GM12878 (cell line): ENCODE measurements at regions of chr22 and their contacts with region 1.

Region 1: DNA sequence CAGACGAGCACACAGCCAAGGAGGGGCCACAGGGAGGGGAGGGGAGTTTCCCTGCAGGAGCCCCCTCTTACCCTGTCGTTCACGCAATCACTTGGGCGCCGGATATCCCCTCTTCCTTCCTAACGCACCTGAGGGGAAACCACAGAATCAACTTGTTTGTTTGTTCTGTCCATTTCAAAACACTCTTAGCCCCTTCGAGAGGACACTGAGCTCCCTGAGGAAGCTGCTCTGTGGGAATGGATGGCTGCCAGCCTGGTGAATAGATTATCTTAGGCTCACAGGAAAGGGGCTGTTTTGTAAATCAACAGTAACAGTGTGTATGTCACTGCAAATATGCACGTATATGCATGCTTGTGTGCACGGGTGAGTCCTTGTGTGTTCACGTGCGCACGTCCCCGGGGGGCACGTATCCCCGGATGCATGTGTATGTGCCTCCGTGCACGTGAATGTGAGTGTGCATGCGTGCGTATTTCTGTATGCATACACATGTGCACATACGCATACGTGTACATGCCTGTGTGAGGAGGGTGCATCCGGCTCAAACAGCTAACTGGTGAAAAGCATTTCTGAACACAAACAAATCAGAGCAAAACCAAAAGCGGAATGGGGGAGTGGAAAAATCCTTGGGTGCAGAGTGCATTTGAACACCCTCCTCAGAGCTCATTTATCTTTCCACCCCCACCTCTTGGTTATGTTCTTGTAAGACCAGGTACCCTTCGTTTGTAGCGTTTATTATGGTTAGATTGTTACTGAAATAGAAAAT is 7.2 kb downstream of the ARSA start:
- DNase-seq: peak; percentile 86
- ATAC-seq: peak; percentile 86
- H3K4me3 ChIP-seq: peak overlapping the region; percentile 70
- H3K27ac ChIP-seq: peak overlapping the region; percentile 97
- H3K4me1 ChIP-seq: peaks cover 28% of the 10 kb centered on the region
- H3K27me3 ChIP-seq: no peaks in the 10 kb centered on the region
- CTCF ChIP-seq: peak in 1 of 3 experiments; percentile 74; a peak in 2 of 6 replicates
- EP300 ChIP-seq: no peak
- POLR2A ChIP-seq: peak; percentile 71
- RAD21 ChIP-seq: no peak

Region 2: DNA sequence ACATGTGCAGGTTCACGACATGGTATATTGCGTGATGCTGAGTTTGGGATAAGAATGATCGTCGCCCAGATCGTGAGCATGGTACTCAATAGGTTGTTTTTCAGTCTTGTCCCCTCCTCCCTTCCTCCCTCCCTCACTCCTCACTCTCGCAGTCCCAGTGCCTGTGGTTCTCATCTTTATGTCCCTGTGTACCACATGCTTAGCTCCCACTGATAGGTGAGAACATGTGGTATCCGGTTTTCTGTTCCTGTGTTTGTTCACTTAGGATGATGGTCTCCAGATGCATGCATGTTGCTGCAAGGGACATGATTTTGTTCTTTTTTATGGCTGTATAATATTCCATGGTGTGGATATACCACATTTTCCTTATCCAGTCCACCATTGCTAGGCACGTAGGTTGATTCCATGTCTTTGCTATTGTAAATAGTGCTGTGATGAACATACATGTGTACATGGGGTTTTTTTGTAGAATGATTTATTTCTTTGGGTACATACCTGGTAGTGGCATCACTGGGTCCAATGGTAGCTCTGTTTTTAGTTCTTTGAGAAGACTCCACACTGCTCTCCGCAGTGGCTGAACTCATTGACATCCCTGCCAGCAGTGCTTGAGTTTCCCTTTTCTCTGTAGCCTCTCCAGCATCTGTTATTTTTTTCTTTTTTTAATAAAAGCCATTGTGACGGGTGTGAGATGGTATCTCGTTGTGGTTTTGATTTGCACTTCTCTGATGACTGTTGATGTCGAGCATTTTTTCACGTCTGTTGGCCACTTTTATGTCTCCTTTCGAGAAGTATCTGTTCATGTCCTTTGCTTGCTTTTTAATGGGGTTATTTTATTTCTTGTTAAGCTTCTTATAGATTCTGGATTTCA is 750.7 kb before region 1 on chr22:
- CTCF ChIA-PET with region 1: no interaction called
- POLR2A ChIA-PET with region 1: no interaction called
- RAD21 ChIA-PET with region 1: no interaction called
- SMC1A ChIA-PET with region 1: no interaction called
- in situ Hi-C with region 1: no loop called
- intact Hi-C with region 1: no loop called
- DNase-seq: no peak
- ATAC-seq: no peak
- H3K4me3 ChIP-seq: no peak overlapping the region
- H3K27ac ChIP-seq: no peak overlapping the region
- H3K4me1 ChIP-seq: no peaks in the 10 kb centered on the region
- H3K27me3 ChIP-seq: no peaks in the 10 kb centered on the region
- CTCF ChIP-seq: no peak
- EP300 ChIP-seq: no peak
- POLR2A ChIP-seq: no peak
- RAD21 ChIP-seq: no peak

Region 3: DNA sequence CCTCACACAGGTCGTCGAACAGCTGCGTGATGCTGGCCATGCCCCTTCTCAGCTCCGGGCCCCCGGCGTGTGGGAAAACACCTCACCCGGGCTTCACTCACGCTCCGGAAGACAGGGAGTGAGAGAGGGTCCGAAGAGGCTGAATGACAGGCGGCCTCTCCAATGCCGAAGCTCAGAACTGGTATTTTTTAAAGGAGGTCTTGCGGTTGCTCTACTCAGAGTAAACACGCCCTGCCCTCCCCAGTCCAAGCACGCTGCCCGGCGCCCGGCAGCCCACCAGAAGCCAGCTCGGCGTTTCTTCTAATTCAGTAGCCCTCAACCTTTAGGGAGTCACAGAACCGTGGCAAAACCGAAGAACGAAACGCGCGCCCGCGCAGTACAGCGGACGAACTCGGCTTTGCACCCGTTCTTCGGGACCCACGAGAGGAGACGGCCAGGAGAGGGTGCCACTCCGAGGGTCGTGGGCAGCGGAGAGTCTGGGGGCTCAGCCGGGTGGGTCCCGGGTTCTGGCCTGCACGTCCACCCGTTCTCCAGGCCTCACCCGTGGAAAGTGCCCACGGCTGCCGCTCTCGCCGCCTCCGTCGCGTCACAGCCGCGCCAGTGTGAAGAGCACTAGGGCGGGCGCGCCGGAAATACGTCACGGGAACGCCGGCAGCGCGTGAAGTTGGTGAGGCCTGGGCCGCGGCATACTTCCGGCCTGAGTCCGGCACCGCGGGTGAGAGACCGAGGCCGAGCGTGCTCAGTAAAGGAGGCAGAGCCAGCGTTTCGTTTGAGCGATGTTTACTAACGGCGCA is 376.2 kb before region 1 on chr22 and contains the start of gene TUBGCP6:
- CTCF ChIA-PET with region 1: interaction called, 24 read pairs
- POLR2A ChIA-PET with region 1: no interaction called
- RAD21 ChIA-PET with region 1: interaction called, 3 read pairs
- SMC1A ChIA-PET with region 1: interaction called, 5 read pairs
- in situ Hi-C with region 1: no loop called
- intact Hi-C with region 1: loop called (anchors 5 kb)
- DNase-seq: peak; percentile 53
- ATAC-seq: peak; percentile 86
- H3K4me3 ChIP-seq: peak within 1 kb of the TSS; percentile 83
- H3K27ac ChIP-seq: peak within 1 kb of the TSS; percentile 71
- H3K4me1 ChIP-seq: peaks cover 20% of the 10 kb centered on the region
- H3K27me3 ChIP-seq: no peaks in the 10 kb centered on the region
- CTCF ChIP-seq: peak in 2 of 3 experiments; percentile 13 to 34; a peak in 3 of 6 replicates
- EP300 ChIP-seq: peak in 1 of 2 experiments; percentile 30; a peak in 1 of 4 replicates
- POLR2A ChIP-seq: peak; percentile 97
- RAD21 ChIP-seq: no peak
- polyA plus RNA-seq, gene TUBGCP6: 0.74 to 2.0 TPM

Region 4: DNA sequence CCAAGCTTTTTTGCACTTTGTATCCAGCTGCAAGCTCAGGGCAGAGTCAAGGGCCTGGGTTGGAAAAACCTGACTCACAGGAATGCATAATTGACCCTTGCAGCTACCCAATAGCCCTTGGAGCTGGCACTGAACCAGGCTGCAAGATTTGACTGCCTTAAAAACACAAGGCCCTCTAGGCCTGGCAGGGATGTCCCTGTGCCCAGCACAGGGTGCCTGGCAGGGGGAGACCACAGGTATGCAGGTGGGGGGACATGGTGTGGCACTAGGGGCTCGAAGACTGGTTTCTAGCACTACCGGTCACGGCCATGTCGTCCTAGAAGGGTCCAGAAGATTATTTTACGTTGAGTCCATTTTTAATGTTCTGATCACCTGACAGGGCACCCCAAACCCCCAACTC is 176.1 kb before region 1 on chr22:
- CTCF ChIA-PET with region 1: no interaction called
- POLR2A ChIA-PET with region 1: no interaction called
- RAD21 ChIA-PET with region 1: no interaction called
- SMC1A ChIA-PET with region 1: no interaction called
- in situ Hi-C with region 1: no loop called
- intact Hi-C with region 1: no loop called
- DNase-seq: no peak
- ATAC-seq: no peak
- H3K4me3 ChIP-seq: no peak overlapping the region
- H3K27ac ChIP-seq: no peak overlapping the region
- H3K4me1 ChIP-seq: no peaks in the 10 kb centered on the region; the same call in 1 of the 2 replicates
- H3K27me3 ChIP-seq: no peaks in the 10 kb centered on the region
- CTCF ChIP-seq: no peak
- EP300 ChIP-seq: no peak
- POLR2A ChIP-seq: no peak
- RAD21 ChIP-seq: no peak

Region 5: DNA sequence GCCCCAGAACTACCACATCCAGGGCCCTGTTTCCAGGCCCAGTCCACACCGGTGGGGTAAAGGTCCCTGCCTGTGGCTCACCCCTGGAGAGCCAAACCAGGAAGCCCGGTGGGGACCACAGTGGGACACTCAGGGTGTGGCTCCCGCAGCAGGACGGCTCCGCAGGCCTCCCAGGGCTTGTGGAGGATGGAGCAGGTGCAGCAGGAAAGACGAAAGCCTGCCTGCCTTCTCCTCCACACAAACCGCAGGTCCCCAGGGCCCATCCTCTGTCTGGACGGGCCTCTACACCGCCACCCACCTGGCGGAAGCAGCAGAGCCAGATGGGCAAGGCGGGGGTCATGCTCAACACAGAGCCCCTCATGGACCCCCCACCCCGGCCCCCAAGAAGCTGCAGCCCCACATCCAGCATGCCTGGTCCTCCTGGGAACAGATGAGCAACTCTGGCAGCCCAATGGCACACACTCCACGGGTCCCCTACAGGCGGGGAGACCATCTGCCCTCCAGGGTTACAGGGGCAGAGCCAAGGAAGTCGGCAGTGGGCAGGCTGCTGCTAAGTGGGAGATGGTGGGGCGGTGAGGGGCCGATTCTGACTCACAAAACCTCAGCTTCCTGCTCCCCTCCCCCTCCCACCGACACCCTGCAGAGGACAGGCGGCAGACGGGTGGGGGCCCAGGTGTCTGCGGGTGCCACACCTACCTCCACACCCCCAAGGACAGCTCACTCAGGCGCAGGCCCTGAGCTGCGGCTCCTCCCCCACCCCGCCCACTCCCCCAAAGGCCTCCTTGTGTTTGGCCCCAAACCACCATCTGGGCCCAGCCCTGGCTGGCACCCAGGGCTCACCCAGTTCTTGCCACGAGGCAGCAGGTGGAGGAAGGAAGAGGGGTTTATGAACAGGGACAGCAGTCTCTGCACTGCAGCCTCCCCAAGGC is 151.1 kb before region 1 on chr22:
- CTCF ChIA-PET with region 1: interaction called, 19 read pairs
- POLR2A ChIA-PET with region 1: interaction called, 3 read pairs
- RAD21 ChIA-PET with region 1: interaction called, 11 read pairs
- SMC1A ChIA-PET with region 1: no interaction called
- in situ Hi-C with region 1: no loop called
- intact Hi-C with region 1: no loop called
- DNase-seq: peak; percentile 87
- ATAC-seq: peak; percentile 81
- H3K4me3 ChIP-seq: peak overlapping the region; percentile 56
- H3K27ac ChIP-seq: peak overlapping the region; percentile 92
- H3K4me1 ChIP-seq: peaks cover 48% of the 10 kb centered on the region
- H3K27me3 ChIP-seq: no peaks in the 10 kb centered on the region
- CTCF ChIP-seq: peak in 1 of 3 experiments; percentile 13; a peak in 2 of 6 replicates
- EP300 ChIP-seq: peak; percentile 47 to 63; a peak in 3 of 4 replicates
- POLR2A ChIP-seq: peak; percentile 69
- RAD21 ChIP-seq: no peak

Region 6: GRCh38 chr22:50507991-50508884 is 112.5 kb before region 1 on chr22 and contains the start of gene NCAPH2:
- CTCF ChIA-PET with region 1: interaction called, 25 read pairs
- POLR2A ChIA-PET with region 1: interaction called, 4 read pairs
- RAD21 ChIA-PET with region 1: interaction called, 22 read pairs
- SMC1A ChIA-PET with region 1: interaction called, 18 read pairs
- in situ Hi-C with region 1: no loop called
- intact Hi-C with region 1: no loop called
- DNase-seq: peak; percentile 83
- ATAC-seq: peak; percentile 69
- H3K4me3 ChIP-seq: peak within 1 kb of the TSS; percentile 100
- H3K27ac ChIP-seq: peak within 1 kb of the TSS; percentile 90
- H3K4me1 ChIP-seq: peaks cover 9% of the 10 kb centered on the region
- H3K27me3 ChIP-seq: no peaks in the 10 kb centered on the region
- CTCF ChIP-seq: peak in 1 of 3 experiments; percentile 33; a peak in 2 of 6 replicates
- EP300 ChIP-seq: no peak
- POLR2A ChIP-seq: peak; percentile 98
- RAD21 ChIP-seq: peak; percentile 16; the same call in 1 of the 2 replicates
- polyA plus RNA-seq, gene NCAPH2: 5.0 to 16.9 TPM

Region 7: GRCh38 chr22:50537765-50538164 is 83.0 kb before region 1 on chr22:
- CTCF ChIA-PET with region 1: interaction called, 24 read pairs
- POLR2A ChIA-PET with region 1: interaction called, 10 read pairs
- RAD21 ChIA-PET with region 1: interaction called, 25 read pairs
- SMC1A ChIA-PET with region 1: interaction called, 14 read pairs
- in situ Hi-C with region 1: no loop called
- intact Hi-C with region 1: loop called (anchors 5 kb)
- DNase-seq: no peak
- ATAC-seq: no peak
- H3K4me3 ChIP-seq: peak overlapping the region; percentile 28; the same call in 1 of the 2 replicates
- H3K27ac ChIP-seq: peak overlapping the region; percentile 100
- H3K4me1 ChIP-seq: peaks cover 68% of the 10 kb centered on the region
- H3K27me3 ChIP-seq: no peaks in the 10 kb centered on the region
- CTCF ChIP-seq: no peak
- EP300 ChIP-seq: no peak
- POLR2A ChIP-seq: no peak
- RAD21 ChIP-seq: no peak

Region 8: DNA sequence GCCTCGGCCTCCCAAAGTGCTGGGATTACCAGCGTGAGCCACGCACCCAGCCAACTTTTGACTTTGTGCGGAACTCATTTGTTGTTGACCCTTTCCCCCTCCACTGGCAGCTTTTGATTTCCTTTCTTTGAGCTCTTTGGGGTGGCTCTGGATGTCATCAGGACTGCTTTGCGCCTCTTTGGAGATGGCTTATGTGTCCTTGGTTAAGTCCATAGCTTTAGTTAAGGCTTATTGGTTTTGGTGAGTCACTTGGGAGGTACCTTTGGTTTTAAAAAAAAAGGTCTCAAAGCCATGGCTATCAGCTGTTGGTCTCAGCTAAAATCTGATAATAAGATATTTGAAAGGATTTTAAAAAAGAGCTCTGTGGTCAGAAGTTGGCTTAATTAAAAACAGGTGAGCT is 12.3 kb after region 1 on chr22:
- CTCF ChIA-PET with region 1: interaction called, 16 read pairs
- POLR2A ChIA-PET with region 1: no interaction called
- RAD21 ChIA-PET with region 1: interaction called, 3 read pairs
- SMC1A ChIA-PET with region 1: interaction called, 7 read pairs
- in situ Hi-C with region 1: no loop called
- intact Hi-C with region 1: no loop called
- DNase-seq: no peak
- ATAC-seq: no peak
- H3K4me3 ChIP-seq: no peak overlapping the region
- H3K27ac ChIP-seq: no peak overlapping the region
- H3K4me1 ChIP-seq: peaks cover 5% of the 10 kb centered on the region; the same call in 1 of the 2 replicates
- H3K27me3 ChIP-seq: no peaks in the 10 kb centered on the region; a peak in 1 of 4 replicates
- CTCF ChIP-seq: no peak
- EP300 ChIP-seq: no peak
- POLR2A ChIP-seq: no peak
- RAD21 ChIP-seq: no peak